BJ (cell line): ENCODE measurements at regions of chrX and their contacts with region 1.

Region 1: DNA sequence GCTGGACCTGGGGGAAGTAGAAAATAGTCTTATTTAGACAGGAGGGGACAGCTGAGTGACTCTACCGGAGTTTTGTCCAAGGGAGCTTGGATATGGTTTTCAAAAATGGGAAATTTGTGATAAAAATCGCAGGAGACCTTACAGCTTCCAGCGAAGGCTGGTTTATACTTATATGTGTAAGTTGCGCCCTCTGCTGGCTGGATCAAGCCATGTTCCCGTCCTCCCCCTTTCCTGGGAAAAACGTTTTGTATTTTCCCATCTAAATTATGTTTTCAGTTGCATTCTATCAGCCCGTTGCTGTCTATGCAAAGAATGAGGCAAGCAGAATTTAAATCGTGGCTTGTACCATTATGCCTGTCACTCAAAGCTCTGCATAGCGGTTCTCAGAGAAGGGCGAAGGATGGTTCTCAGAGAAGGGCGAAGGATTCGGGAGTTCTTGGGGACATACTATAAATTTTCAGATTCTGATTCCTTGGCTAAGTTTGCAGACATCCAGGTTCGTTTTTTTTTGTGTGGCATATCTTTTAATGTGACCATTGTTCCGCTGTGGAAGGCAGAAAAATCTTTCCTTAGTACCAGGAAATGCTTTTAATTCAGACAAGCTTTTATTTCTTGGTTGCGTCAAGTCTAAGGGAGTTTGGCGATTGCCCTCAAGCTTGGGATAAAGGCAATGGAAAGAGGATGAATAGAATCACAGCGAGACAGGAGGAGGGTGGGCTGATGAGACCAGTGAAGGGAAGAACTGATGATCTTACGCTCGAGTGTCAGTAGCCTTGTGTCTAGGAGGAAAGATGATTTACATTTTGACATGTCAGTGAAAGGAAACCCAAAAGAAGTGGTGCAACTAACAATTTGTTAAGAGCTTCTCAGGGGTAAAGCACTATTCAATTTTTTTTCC is 128.5 kb upstream of the ARX start:
- DNase-seq: no peak
- H3K4me3 ChIP-seq: no peak overlapping the region
- H3K27me3 ChIP-seq: no peaks in the 10 kb centered on the region
- CTCF ChIP-seq: peak; percentile 64

Region 2: DNA sequence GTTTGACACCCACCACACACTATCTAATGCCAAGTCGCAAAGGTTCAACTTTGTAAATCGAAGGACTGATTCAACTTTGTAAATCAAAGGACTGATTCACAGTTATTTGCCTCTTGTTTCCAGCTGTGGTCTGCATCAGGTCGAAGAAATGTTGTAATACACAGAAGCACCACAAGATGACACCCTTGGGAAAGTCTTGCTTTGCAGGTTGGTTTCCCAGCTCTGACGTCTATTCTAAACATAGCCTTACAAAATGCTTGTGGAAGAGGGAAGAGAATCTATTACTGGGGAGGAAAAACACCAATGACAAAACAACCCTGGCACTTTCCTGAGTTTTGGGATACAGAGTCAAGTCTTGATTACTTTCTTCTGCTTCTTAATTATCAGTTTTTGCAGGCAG is 748.5 kb before region 1 on chrX:
- CTCF ChIA-PET with region 1: interaction called, 15 read pairs
- POLR2A ChIA-PET with region 1: no interaction called
- DNase-seq: peak; percentile 19
- H3K4me3 ChIP-seq: no peak overlapping the region
- H3K27me3 ChIP-seq: no peaks in the 10 kb centered on the region; the same call in none of the 2 replicates
- CTCF ChIP-seq: peak; percentile 66

Region 3: GRCh38 chrX:24748202-24748843 is 396.0 kb before region 1 on chrX:
- CTCF ChIA-PET with region 1: interaction called, 20 read pairs
- POLR2A ChIA-PET with region 1: no interaction called
- DNase-seq: no peak
- H3K4me3 ChIP-seq: no peak overlapping the region
- H3K27me3 ChIP-seq: no peaks in the 10 kb centered on the region
- CTCF ChIP-seq: no peak

Region 4: DNA sequence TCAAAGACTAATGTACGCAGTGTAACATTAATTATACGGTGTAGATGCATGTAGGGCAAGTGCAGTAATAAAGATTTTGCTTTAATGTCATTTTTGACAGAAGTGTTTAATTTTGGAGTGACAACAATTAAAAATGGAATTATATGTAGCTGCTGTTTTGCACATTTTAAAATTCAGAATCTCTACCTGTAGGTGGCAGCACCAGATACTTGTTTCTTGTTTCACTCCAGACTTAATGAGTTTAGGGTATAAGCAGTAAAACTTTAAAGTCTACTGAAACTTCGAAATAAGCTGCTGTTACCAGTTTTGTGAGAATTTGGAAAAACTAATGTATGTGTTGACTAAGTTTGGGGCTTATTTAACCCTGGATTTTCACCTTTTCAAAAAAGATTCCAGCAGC is 305.7 kb before region 1 on chrX:
- CTCF ChIA-PET with region 1: interaction called, 49 read pairs
- POLR2A ChIA-PET with region 1: no interaction called
- DNase-seq: no peak
- H3K4me3 ChIP-seq: no peak overlapping the region
- H3K27me3 ChIP-seq: no peaks in the 10 kb centered on the region
- CTCF ChIP-seq: no peak; the same call in 1 of the 2 replicates

Region 5: DNA sequence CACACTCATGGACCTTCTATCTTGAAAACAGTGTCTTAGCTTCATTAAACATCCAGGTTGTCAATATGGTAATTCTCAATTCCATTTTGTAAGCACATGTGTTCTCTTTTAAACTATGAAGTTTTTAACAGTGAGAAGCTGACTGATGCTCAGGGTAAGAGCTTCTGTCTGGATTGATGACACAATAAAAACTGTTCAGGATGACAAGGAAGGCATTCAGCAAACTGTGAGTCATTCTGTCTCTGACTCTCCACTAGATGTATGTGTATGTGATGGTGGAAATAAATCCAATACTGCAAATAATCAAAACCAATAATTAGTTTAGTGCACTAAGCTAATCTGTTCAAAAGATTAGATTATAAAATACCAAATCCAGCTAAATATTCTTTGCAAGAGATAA is 13.2 kb before region 1 on chrX:
- CTCF ChIA-PET with region 1: interaction called, 10 read pairs
- POLR2A ChIA-PET with region 1: no interaction called
- DNase-seq: no peak
- H3K4me3 ChIP-seq: no peak overlapping the region
- H3K27me3 ChIP-seq: no peaks in the 10 kb centered on the region
- CTCF ChIP-seq: no peak

Region 6: GRCh38 chrX:25198891-25199290 is 54.6 kb after region 1 on chrX:
- CTCF ChIA-PET with region 1: no interaction called
- POLR2A ChIA-PET with region 1: no interaction called
- DNase-seq: no peak
- H3K4me3 ChIP-seq: no peak overlapping the region
- H3K27me3 ChIP-seq: no peaks in the 10 kb centered on the region
- CTCF ChIP-seq: no peak